ENCODE measurements at regions of chr9 and their contacts with region 1.

Region 1: GRCh38 chr9:115250621-115251032 is 132.7 kb upstream of the TNC start:
- DNase-seq: peak in 1 of 2 experiments; percentile 30
- H3K4me3 ChIP-seq: no peak overlapping the region
- H3K27ac ChIP-seq: no peak overlapping the region
- H3K4me1 ChIP-seq: no peaks in the 10 kb centered on the region
- H3K27me3 ChIP-seq: no peaks in the 10 kb centered on the region
- CTCF ChIP-seq: no peak

Region 2: DNA sequence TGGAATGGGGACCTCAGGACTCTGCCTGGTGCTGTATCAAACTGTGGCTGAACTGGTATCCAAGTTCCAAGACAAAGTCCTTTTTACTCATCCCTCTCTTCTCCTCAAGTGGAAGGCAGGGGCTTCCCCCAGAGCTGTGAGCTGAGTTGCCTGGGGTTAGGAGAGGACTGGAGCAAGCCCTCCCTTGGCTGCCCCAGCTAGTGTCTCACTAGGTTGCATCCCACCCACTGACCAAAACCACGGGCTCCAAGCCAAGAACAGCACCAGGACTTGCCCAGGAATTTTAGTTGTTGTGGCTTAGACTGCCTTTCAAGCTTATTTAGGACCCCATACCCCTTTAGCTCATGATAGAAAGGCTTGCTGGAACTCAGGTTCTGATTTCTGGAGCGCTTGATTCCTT is 26.0 kb after region 1 on chr9:
- CTCF ChIA-PET with region 1: no interaction called
- POLR2A ChIA-PET with region 1: no interaction called
- intact Hi-C with region 1: loop called (anchors 1 kb)
- DNase-seq: no peak
- H3K4me3 ChIP-seq: no peak overlapping the region
- H3K27ac ChIP-seq: no peak overlapping the region
- H3K4me1 ChIP-seq: no peaks in the 10 kb centered on the region
- H3K27me3 ChIP-seq: no peaks in the 10 kb centered on the region
- CTCF ChIP-seq: no peak

Region 3: DNA sequence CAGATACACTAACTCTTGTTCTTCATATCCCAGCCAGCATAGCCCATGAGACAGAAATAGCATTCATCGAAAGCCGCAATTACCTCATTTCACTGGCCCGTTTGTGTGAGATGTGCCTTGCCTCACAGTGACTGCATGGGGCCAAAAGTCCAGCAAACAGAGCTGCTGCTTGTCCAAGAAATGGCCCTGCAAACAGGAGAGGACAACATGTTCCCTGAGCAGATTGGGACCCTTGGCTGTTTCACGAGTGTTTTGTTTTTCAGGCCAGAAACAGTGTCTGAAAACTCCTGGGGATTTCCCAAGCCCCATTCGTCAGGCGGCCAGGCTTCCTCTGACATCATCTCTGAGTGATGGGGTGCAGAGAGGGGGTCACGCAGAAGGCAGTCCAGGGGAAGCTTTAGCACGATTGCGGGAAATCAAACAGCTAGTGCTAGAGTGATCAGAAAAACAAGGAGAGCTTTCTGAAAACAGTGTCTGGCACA is 399.4 kb after region 1 on chr9:
- CTCF ChIA-PET with region 1: no interaction called
- POLR2A ChIA-PET with region 1: no interaction called
- intact Hi-C with region 1: no loop called
- DNase-seq: no peak
- H3K4me3 ChIP-seq: no peak overlapping the region
- H3K27ac ChIP-seq: no peak overlapping the region
- H3K4me1 ChIP-seq: no peaks in the 10 kb centered on the region
- H3K27me3 ChIP-seq: no peaks in the 10 kb centered on the region
- CTCF ChIP-seq: no peak

Region 4: GRCh38 chr9:115808695-115809094 is 558.1 kb after region 1 on chr9:
- CTCF ChIA-PET with region 1: no interaction called
- POLR2A ChIA-PET with region 1: no interaction called
- intact Hi-C with region 1: no loop called
- DNase-seq: no peak
- H3K4me3 ChIP-seq: no peak overlapping the region
- H3K27ac ChIP-seq: no peak overlapping the region
- H3K4me1 ChIP-seq: no peaks in the 10 kb centered on the region; the same call in 1 of the 2 replicates
- H3K27me3 ChIP-seq: no peaks in the 10 kb centered on the region
- CTCF ChIP-seq: no peak